Caco-2 (cell line): ENCODE measurements at regions of chr1 and their contacts with region 1.

Region 1: GRCh38 chr1:168116327-168116806 is 20.4 kb downstream of the GPR161 start:
- DNase-seq: peak; percentile 50 to 70
- H3K4me3 ChIP-seq: no peak overlapping the region
- H3K4me3 Mint-ChIP-seq: peak overlapping the region; percentile 9
- H3K27ac Mint-ChIP-seq: peak overlapping the region; percentile 32
- H3K4me1 ChIP-seq: peaks cover 14% of the 10 kb centered on the region
- H3K4me1 Mint-ChIP-seq: peaks cover 23% of the 10 kb centered on the region
- H3K27me3 ChIP-seq: no peaks in the 10 kb centered on the region
- H3K27me3 Mint-ChIP-seq: no peaks in the 10 kb centered on the region
- CTCF ChIP-seq: no peak

Region 2: GRCh38 chr1:168004531-168004930 is 111.8 kb before region 1 on chr1:
- CTCF ChIA-PET with region 1: no interaction called
- POLR2A ChIA-PET with region 1: no interaction called
- intact Hi-C with region 1: no loop called
- DNase-seq: no peak
- H3K4me3 ChIP-seq: no peak overlapping the region
- H3K4me3 Mint-ChIP-seq: no peak overlapping the region
- H3K27ac Mint-ChIP-seq: no peak overlapping the region
- H3K4me1 ChIP-seq: no peaks in the 10 kb centered on the region
- H3K4me1 Mint-ChIP-seq: no peaks in the 10 kb centered on the region
- H3K27me3 ChIP-seq: no peaks in the 10 kb centered on the region
- H3K27me3 Mint-ChIP-seq: no peaks in the 10 kb centered on the region
- CTCF ChIP-seq: no peak

Region 3: GRCh38 chr1:168136709-168137514 is 20.5 kb after region 1 on chr1 and contains the start of gene GPR161:
- CTCF ChIA-PET with region 1: interaction called, 7 read pairs
- POLR2A ChIA-PET with region 1: no interaction called
- intact Hi-C with region 1: loop called (anchors 1 kb)
- DNase-seq: peak; percentile 62 to 69
- H3K4me3 ChIP-seq: peak within 1 kb of the TSS; percentile 72
- H3K4me3 Mint-ChIP-seq: peak within 1 kb of the TSS; percentile 91
- H3K27ac Mint-ChIP-seq: peak within 1 kb of the TSS; percentile 73
- H3K4me1 ChIP-seq: peaks cover 32% of the 10 kb centered on the region
- H3K4me1 Mint-ChIP-seq: peaks cover 25% of the 10 kb centered on the region
- H3K27me3 ChIP-seq: no peaks in the 10 kb centered on the region
- H3K27me3 Mint-ChIP-seq: no peaks in the 10 kb centered on the region
- CTCF ChIP-seq: no peak
- total RNA-seq, gene GPR161: 38.2 and 42.7 TPM in 2 replicates

Region 4: GRCh38 chr1:169044296-169044695 is 927.9 kb after region 1 on chr1:
- CTCF ChIA-PET with region 1: no interaction called
- POLR2A ChIA-PET with region 1: no interaction called
- intact Hi-C with region 1: no loop called
- DNase-seq: no peak
- H3K4me3 ChIP-seq: no peak overlapping the region
- H3K4me3 Mint-ChIP-seq: no peak overlapping the region
- H3K27ac Mint-ChIP-seq: no peak overlapping the region
- H3K4me1 ChIP-seq: no peaks in the 10 kb centered on the region
- H3K4me1 Mint-ChIP-seq: no peaks in the 10 kb centered on the region
- H3K27me3 ChIP-seq: no peaks in the 10 kb centered on the region
- H3K27me3 Mint-ChIP-seq: no peaks in the 10 kb centered on the region
- CTCF ChIP-seq: no peak